Activated naive CD4-positive, alpha-beta T cell treated with anti-CD3 and anti-CD28 coated beads for 36 hours (primary cell): ENCODE measurements at regions of chr11 and their contacts with region 1.

Region 1: GRCh38 chr11:134223836-134224709 is at the starts of genes NCAPD3 and VPS26B:
- DNase-seq: peak; percentile 98
- H3K4me3 Mint-ChIP-seq: peak within 1 kb of the TSS; percentile 95
- H3K27ac Mint-ChIP-seq: peak within 1 kb of the TSS; percentile 97
- H3K4me1 Mint-ChIP-seq: peaks cover 59% of the 10 kb centered on the region
- H3K27me3 Mint-ChIP-seq: no peaks in the 10 kb centered on the region
- total RNA-seq, gene NCAPD3: 126 TPM
- total RNA-seq, gene VPS26B: 39.8 to 42.3 TPM

Region 2: DNA sequence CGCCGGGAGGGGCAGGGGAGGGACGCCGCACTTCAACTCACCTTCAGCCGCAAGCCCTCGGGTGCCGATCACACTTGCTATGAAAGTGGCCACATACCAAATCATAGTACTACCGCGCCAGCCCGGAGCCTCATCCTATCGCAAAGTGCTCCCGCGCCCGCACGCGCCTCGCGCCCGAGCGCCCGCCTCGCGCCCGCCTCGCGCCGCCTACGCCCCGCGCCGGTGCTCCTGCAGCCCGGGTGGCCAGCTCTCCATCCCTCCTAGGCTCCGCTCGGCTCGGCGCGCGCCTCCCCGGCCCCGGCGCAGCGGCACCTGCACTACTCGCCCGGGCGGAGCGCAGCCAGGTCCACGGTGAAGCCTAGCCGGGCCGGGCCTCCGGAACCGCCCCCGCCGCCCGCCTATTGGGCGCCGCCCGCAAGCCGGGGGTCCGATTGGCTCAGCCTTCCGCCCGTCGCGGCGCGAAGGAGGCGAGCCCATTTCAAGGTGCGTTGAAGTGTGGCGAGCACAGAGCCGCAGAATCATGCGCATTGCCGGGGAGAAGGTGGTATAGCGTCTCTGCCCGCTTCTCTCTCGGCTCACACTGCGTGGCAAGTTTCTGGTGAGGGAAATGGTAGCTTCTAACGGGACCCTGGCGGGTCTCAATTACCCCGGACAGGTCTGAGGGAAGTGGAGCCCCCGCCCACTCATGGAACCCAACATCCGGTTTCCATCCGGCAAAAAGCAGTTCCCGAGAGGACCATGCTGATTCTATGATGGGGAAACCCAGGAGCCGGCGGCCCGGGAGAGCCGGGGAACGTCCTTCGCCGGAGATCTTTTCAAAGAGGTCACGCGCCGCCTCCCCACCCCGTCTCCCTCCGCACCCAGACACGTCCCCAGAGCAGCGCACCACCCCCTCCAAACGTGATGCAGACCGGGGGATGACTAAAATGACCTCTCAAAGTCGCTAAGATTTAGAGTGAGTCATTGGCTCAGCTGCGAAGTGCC is 267.1 kb before region 1 on chr11 and contains the start of gene IGSF9B:
- CTCF ChIA-PET with region 1: no interaction called
- intact Hi-C with region 1: loop called (anchors 1 kb)
- DNase-seq: peak; percentile 91
- H3K4me3 Mint-ChIP-seq: peak within 1 kb of the TSS; percentile 85
- H3K27ac Mint-ChIP-seq: peak within 1 kb of the TSS; percentile 86
- H3K4me1 Mint-ChIP-seq: peaks cover 45% of the 10 kb centered on the region
- H3K27me3 Mint-ChIP-seq: no peaks in the 10 kb centered on the region
- total RNA-seq, gene IGSF9B: 26.5 to 34.0 TPM

Region 3: GRCh38 chr11:134033696-134034491 is 190.2 kb before region 1 on chr11:
- CTCF ChIA-PET with region 1: no interaction called
- intact Hi-C with region 1: loop called (anchors 1 kb)
- DNase-seq: peak; percentile 84
- H3K4me3 Mint-ChIP-seq: peak overlapping the region; percentile 44
- H3K27ac Mint-ChIP-seq: peak overlapping the region; percentile 43
- H3K4me1 Mint-ChIP-seq: peaks cover 52% of the 10 kb centered on the region
- H3K27me3 Mint-ChIP-seq: no peaks in the 10 kb centered on the region

Region 4: GRCh38 chr11:134124660-134125451 is 99.2 kb before region 1 on chr11:
- CTCF ChIA-PET with region 1: no interaction called
- intact Hi-C with region 1: no loop called
- DNase-seq: peak; percentile 15
- H3K4me3 Mint-ChIP-seq: peak overlapping the region; percentile 12
- H3K27ac Mint-ChIP-seq: no peak overlapping the region
- H3K4me1 Mint-ChIP-seq: peaks cover 13% of the 10 kb centered on the region
- H3K27me3 Mint-ChIP-seq: peaks cover 34% of the 10 kb centered on the region

Region 5: DNA sequence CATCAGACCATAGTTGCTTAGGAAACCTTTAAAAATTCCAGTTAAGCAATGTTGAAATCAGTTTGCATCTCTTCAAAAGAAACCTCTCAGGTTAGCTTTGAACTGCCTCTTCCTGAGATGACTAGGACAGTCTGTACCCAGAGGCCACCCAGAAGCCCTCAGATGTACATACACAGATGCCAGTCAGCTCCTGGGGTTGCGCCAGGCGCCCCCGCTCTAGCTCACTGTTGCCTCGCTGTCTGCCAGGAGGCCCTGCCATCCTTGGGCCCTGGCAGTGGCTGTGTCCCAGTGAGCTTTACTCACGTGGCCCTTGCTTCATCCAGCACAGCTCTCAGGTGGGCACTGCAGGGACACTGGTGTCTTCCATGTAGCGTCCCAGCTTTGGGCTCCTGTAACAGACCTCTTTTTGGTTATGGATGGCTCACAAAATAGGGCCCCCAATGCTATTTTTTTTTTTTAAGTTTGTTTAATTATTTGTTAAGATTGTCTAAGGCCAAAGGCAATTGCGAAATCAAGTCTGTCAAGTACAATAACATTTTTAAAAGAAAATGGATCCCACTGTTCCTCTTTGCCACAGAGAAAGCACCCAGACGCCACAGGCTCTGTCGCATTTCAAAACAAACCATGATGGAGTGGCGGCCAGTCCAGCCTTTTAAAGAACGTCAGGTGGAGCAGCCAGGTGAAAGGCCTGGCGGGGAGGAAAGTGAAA is 73.7 kb before region 1 on chr11:
- CTCF ChIA-PET with region 1: no interaction called
- intact Hi-C with region 1: no loop called
- DNase-seq: peak; percentile 40
- H3K4me3 Mint-ChIP-seq: no peak overlapping the region
- H3K27ac Mint-ChIP-seq: no peak overlapping the region
- H3K4me1 Mint-ChIP-seq: peaks cover 3% of the 10 kb centered on the region
- H3K27me3 Mint-ChIP-seq: no peaks in the 10 kb centered on the region

Region 6: DNA sequence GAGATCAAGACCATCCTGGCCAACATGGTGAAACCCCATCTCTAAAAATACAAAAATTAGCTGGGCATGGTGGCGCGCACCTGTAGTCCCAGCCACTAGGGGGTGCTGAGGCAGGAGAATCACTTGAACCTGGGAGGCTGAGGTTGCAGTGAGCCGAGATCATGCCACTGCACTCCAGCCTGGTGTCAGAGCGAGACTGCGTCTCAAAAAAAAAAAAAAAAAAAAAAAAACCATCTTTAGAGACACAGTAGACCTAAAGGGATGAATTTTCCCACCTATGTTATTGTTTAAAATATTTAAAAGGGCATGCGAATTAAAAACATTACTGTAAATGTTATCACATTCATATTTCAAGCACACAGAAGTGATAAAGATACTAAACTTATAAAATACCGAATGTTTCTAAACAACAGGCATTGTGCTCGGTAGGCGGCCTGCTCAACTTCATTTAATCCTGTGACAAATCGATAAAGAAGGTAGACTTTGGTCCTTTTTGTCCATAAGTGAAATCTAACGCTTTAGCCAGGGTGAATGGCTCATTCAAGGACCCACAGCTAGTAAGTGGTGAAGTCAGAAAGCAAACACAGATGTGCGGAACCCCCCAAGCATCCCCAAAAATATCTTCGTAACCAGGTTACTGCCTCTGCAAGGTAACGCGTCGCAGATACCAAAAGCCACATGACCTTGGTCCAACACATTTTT is 16.4 kb before region 1 on chr11:
- CTCF ChIA-PET with region 1: interaction called, 6 read pairs
- intact Hi-C with region 1: loop called (anchors 1 kb)
- DNase-seq: peak; percentile 75
- H3K4me3 Mint-ChIP-seq: no peak overlapping the region
- H3K27ac Mint-ChIP-seq: no peak overlapping the region
- H3K4me1 Mint-ChIP-seq: peaks cover 6% of the 10 kb centered on the region
- H3K27me3 Mint-ChIP-seq: no peaks in the 10 kb centered on the region

Region 7: GRCh38 chr11:134253188-134253993 is 29.3 kb after region 1 on chr11 and contains the starts of genes ACAD8 and THYN1:
- CTCF ChIA-PET with region 1: interaction called, 3 read pairs
- intact Hi-C with region 1: loop called (anchors 1 kb)
- DNase-seq: peak; percentile 97
- H3K4me3 Mint-ChIP-seq: peak within 1 kb of the TSS; percentile 90
- H3K27ac Mint-ChIP-seq: peak within 1 kb of the TSS; percentile 54
- H3K4me1 Mint-ChIP-seq: peaks cover 26% of the 10 kb centered on the region
- H3K27me3 Mint-ChIP-seq: no peaks in the 10 kb centered on the region
- total RNA-seq, gene ACAD8: 14.8 to 17.6 TPM
- total RNA-seq, gene THYN1: 85.6 to 92.6 TPM

Region 8: GRCh38 chr11:134275534-134276395 is 51.7 kb after region 1 on chr11 and contains the start of gene GLB1L3:
- CTCF ChIA-PET with region 1: interaction called, 11 read pairs
- intact Hi-C with region 1: loop called (anchors 1 kb)
- DNase-seq: peak; percentile 83
- H3K4me3 Mint-ChIP-seq: peak within 1 kb of the TSS; percentile 95
- H3K27ac Mint-ChIP-seq: peak within 1 kb of the TSS; percentile 98
- H3K4me1 Mint-ChIP-seq: peaks cover 36% of the 10 kb centered on the region
- H3K27me3 Mint-ChIP-seq: peaks cover 6% of the 10 kb centered on the region
- total RNA-seq, gene GLB1L3: 11.8 to 13.2 TPM

Region 9: GRCh38 chr11:134331354-134332188 is 107.5 kb after region 1 on chr11 and contains the start of gene GLB1L2:
- CTCF ChIA-PET with region 1: no interaction called
- intact Hi-C with region 1: loop called (anchors 1 kb)
- DNase-seq: peak; percentile 69
- H3K4me3 Mint-ChIP-seq: peak within 1 kb of the TSS; percentile 80
- H3K27ac Mint-ChIP-seq: no peak within 1 kb of the TSS
- H3K4me1 Mint-ChIP-seq: peaks cover 7% of the 10 kb centered on the region
- H3K27me3 Mint-ChIP-seq: peaks cover 9% of the 10 kb centered on the region
- total RNA-seq, gene GLB1L2: 9.3 to 11.0 TPM